ENCODE measurements at regions of chr3 and their contacts with region 1.

Region 1: DNA sequence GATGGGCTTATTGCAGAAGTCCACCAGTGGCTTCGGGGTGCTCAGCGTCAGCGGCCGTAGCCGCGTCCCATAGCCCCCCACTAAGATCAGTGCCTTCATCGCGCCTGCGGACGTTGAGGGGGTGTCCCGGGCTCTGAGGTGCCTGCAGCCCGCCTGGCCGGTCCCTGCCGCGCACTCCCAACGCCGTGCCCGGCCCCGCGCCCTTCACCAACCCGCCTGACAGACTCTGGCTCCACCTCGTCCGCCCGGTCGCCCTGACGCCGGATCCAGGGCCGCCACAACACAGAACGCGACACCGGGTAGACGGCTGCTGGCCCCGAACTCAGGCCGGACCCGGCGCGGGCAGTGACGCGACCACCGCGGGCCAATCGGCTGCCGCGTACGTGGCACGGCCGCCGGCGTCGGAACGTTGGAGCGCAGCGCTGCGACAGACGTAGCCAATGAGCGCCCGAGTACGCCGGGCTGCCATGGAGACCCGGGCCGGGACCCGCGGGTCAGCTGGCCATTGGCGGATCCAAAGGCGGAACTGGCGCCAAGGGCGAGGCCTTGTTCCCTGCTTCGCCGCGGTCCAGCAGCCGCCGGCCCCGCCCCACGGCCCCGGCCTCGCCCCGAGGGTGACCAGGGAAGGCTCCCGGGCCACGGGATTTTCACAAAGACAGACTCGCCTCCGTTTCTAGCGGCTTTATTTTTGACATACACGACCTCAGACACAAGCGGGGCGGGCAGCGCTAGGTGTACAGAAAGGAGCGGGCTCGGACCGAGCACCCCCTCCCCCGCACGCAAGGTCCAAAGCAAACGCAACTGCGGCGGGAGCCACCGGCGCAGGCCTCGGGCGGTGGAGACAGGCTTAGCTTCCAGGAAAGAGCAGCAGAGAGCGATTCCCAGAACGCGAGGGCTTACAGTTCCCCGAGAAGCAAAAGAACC is at the start of gene GMPPB:
- DNase-seq: peak; percentile 99
- H3K4me3 ChIP-seq: peak within 1 kb of the TSS; percentile 86 to 99 (median 94)
- H3K27ac ChIP-seq: peak within 1 kb of the TSS; percentile 92 to 98 (median 94)
- H3K4me1 ChIP-seq: peaks cover 29 to 51% (median 45%) of the 10 kb centered on the region in 4 donors
- H3K27me3 ChIP-seq: no peaks in the 10 kb centered on the region
- CTCF ChIP-seq: no peak
- EP300 ChIP-seq: no peak
- POLR2A ChIP-seq: peak; percentile 68
- total RNA-seq, gene GMPPB: 12.0 to 18.9 (median 17.6) TPM

Region 2: GRCh38 chr3:49786241-49786958 is 62.5 kb after region 1 on chr3 and contains the start of gene IP6K1:
- intact Hi-C with region 1: loop called (anchors 5 kb)
- DNase-seq: peak; percentile 100
- H3K4me3 ChIP-seq: peak within 1 kb of the TSS; percentile 81 to 100 (median 94)
- H3K27ac ChIP-seq: peak within 1 kb of the TSS; percentile 90 to 98 (median 96)
- H3K4me1 ChIP-seq: peaks cover 35 to 52% (median 50%) of the 10 kb centered on the region in 4 donors
- H3K27me3 ChIP-seq: peaks cover 0 to 3% (median 0%) of the 10 kb centered on the region in 4 donors
- CTCF ChIP-seq: peak in 1 of 3 experiments; percentile 3
- EP300 ChIP-seq: no peak
- POLR2A ChIP-seq: peak; percentile 49
- total RNA-seq, gene IP6K1: 33.2 to 63.4 (median 52.4) TPM

Measured in esophagus muscularis mucosa (tissue), 4 donors.